ENCODE measurements at regions of chr11 and their contacts with region 1.

Region 1: GRCh38 chr11:122202951-122203456 is 87.0 kb upstream of the BLID start:
- DNase-seq: peak; percentile 79
- H3K4me3 ChIP-seq: peak overlapping the region; percentile 47 to 67; a peak in 3 of 4 replicates
- H3K27ac ChIP-seq: peak overlapping the region; percentile 85 to 99
- H3K4me1 ChIP-seq: peaks cover 13 to 22% of the 10 kb centered on the region in 2 experiments
- H3K27me3 ChIP-seq: no peaks in the 10 kb centered on the region
- CTCF ChIP-seq: peak; percentile 98
- EP300 ChIP-seq: peak in 1 of 2 experiments; percentile 37; a peak in 1 of 4 replicates
- RAD21 ChIP-seq: peak; percentile 90

Region 2: DNA sequence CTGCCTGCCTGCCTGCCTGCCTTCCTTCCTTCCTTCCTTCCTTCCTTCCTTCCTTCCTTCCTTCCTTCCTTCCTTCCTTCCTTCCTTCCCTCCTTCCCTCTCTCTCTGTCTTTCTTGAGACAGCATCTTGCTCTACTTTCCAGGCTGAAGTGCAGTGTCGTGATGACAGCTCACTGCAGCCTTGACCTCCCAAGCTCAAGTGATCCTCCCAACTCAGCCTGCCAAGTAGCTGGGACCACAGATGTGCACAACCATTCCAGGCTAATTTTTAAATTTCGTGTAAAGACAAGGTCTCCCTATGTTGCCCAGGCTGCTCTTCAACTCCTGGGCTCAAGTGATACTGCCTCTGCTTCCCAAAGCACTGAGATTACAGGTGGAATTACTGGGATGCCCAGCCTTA is 422.0 kb before region 1 on chr11:
- CTCF ChIA-PET with region 1: no interaction called
- POLR2A ChIA-PET with region 1: no interaction called
- DNase-seq: no peak
- H3K4me3 ChIP-seq: no peak overlapping the region
- H3K27ac ChIP-seq: no peak overlapping the region
- H3K4me1 ChIP-seq: peaks cover 0 to 10% of the 10 kb centered on the region in 2 experiments; a peak in 2 of 4 replicates
- H3K27me3 ChIP-seq: no peaks in the 10 kb centered on the region
- CTCF ChIP-seq: no peak
- EP300 ChIP-seq: no peak
- RAD21 ChIP-seq: no peak

Region 3: GRCh38 chr11:122108192-122108799 is 94.7 kb before region 1 on chr11:
- CTCF ChIA-PET with region 1: interaction called, 35 read pairs
- POLR2A ChIA-PET with region 1: no interaction called
- DNase-seq: no peak
- H3K4me3 ChIP-seq: no peak overlapping the region; a peak in 1 of 4 replicates
- H3K27ac ChIP-seq: peak overlapping the region in 1 of 2 experiments; percentile 94; a peak in 2 of 4 replicates
- H3K4me1 ChIP-seq: peaks cover 8 to 70% of the 10 kb centered on the region in 2 experiments
- H3K27me3 ChIP-seq: no peaks in the 10 kb centered on the region
- CTCF ChIP-seq: peak; percentile 85
- EP300 ChIP-seq: no peak
- RAD21 ChIP-seq: peak; percentile 50

Region 4: GRCh38 chr11:122179961-122180834 is 22.8 kb before region 1 on chr11:
- CTCF ChIA-PET with region 1: interaction called, 16 read pairs
- POLR2A ChIA-PET with region 1: no interaction called
- DNase-seq: no peak
- H3K4me3 ChIP-seq: peak overlapping the region; percentile 56 to 70; a peak in 3 of 4 replicates
- H3K27ac ChIP-seq: peak overlapping the region; percentile 87 to 96
- H3K4me1 ChIP-seq: peaks cover 0 to 22% of the 10 kb centered on the region in 2 experiments; a peak in 3 of 4 replicates
- H3K27me3 ChIP-seq: no peaks in the 10 kb centered on the region
- CTCF ChIP-seq: no peak
- EP300 ChIP-seq: peak in 1 of 2 experiments; percentile 96; a peak in 2 of 4 replicates
- RAD21 ChIP-seq: no peak

Region 5: GRCh38 chr11:122192634-122193255 is 10.3 kb before region 1 on chr11:
- CTCF ChIA-PET with region 1: interaction called, 16 read pairs
- POLR2A ChIA-PET with region 1: no interaction called
- DNase-seq: no peak
- H3K4me3 ChIP-seq: no peak overlapping the region
- H3K27ac ChIP-seq: peak overlapping the region; percentile 69 to 99
- H3K4me1 ChIP-seq: peaks cover 0 to 63% of the 10 kb centered on the region in 2 experiments
- H3K27me3 ChIP-seq: no peaks in the 10 kb centered on the region
- CTCF ChIP-seq: no peak
- EP300 ChIP-seq: peak in 1 of 2 experiments; percentile 59; a peak in 1 of 4 replicates
- RAD21 ChIP-seq: no peak

Region 6: GRCh38 chr11:122342089-122342744 is 139.2 kb after region 1 on chr11:
- CTCF ChIA-PET with region 1: no interaction called
- POLR2A ChIA-PET with region 1: no interaction called
- DNase-seq: no peak
- H3K4me3 ChIP-seq: no peak overlapping the region
- H3K27ac ChIP-seq: no peak overlapping the region
- H3K4me1 ChIP-seq: peaks cover 0 to 14% of the 10 kb centered on the region in 2 experiments; a peak in 2 of 4 replicates
- H3K27me3 ChIP-seq: no peaks in the 10 kb centered on the region
- CTCF ChIP-seq: no peak
- EP300 ChIP-seq: no peak
- RAD21 ChIP-seq: no peak

Measured in SK-N-SH (cell line).